ENCODE measurements at regions of chr3 and their contacts with region 1.

Region 1: DNA sequence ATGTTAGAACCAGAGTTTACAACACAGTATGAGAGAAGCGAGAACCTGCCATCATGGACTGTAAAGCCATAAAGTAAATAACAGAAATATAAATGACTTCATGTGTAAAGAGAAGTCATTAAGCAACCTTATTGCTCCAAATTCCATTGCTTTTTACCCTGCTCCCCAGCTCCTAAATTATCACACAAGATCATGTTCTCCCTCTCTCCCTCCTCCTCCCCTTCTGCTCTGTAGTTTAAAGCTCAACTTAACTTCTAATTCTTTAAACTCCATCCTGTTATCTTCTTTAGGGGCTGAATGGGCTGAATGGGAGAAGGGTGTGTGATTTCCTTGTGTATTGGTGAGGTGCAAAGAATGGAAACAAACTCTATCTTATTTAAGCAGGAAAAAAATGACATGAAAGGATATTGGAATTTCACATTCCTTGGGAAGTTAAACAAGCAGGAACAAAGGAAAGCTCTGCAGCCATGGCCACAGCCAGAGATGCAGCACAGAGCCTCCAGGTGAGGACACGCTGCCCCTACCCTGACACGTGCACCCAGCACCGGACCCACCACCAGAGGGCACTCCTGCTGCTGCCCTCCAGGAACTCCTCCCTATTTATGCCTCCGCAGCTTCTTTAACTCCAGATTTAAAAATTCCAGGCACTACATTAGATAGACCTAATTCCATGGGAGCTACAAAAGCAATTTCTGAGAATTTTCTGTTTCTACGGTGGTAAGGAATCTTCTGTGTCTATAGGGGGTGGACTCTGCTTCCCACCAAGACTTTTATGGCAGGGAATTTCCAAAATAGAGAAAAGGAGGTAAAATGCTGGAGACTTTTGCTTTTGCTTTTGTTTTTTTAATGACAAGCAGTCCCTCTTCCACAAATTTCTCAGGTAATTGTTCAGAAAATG is 76.9 kb upstream of the ABI3BP start:
- DNase-seq: peak; percentile 94
- H3K4me3 Mint-ChIP-seq: no peak overlapping the region
- H3K27ac Mint-ChIP-seq: peak overlapping the region; percentile 72
- H3K4me1 Mint-ChIP-seq: peaks cover 47% of the 10 kb centered on the region
- H3K27me3 Mint-ChIP-seq: no peaks in the 10 kb centered on the region
- CTCF ChIP-seq: peak; percentile 80

Region 2: DNA sequence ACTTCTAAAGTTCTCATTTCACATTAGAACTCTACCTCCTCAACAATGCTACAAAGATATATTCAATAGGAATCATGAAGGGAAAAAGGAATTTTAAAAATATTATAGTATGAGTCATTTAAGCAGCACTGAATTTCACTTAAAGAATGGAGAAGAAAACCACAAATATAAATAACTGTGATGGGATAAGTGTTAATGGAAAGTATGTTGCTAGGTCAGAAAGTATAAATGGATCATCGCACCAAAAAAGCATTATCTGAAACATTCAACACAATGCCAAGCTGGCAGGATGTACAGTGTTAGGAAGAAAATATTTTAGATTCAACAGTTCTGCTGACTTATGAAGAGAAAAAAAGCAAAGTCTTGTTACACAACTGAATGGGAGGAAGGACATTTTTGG is 259.5 kb before region 1 on chr3:
- CTCF ChIA-PET with region 1: no interaction called
- intact Hi-C with region 1: no loop called
- DNase-seq: no peak
- H3K4me3 Mint-ChIP-seq: no peak overlapping the region
- H3K27ac Mint-ChIP-seq: no peak overlapping the region
- H3K4me1 Mint-ChIP-seq: no peaks in the 10 kb centered on the region
- H3K27me3 Mint-ChIP-seq: no peaks in the 10 kb centered on the region
- CTCF ChIP-seq: no peak

Region 3: DNA sequence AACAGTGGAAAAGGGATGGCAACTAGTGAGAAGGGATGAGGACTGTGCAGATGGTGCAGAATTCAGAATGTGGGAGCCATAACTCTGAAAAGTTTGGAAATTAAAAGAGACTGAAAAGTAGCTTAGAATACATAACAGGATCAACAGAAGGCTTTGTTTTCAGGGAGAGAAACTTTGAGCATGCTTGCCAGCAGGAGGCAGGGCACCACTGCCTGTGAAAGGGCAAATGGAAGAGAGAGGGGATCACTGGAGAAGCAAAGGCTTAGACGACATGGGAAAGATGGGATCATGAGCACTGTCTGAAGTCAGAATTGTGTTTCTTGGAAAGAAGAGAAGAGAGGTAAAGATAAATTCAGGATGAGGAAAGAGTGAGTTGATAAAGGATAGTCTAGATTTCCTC is 176.6 kb before region 1 on chr3:
- CTCF ChIA-PET with region 1: interaction called, 4 read pairs
- intact Hi-C with region 1: loop called (anchors 5 kb)
- DNase-seq: peak; percentile 50
- H3K4me3 Mint-ChIP-seq: no peak overlapping the region
- H3K27ac Mint-ChIP-seq: no peak overlapping the region
- H3K4me1 Mint-ChIP-seq: peaks cover 16% of the 10 kb centered on the region
- H3K27me3 Mint-ChIP-seq: no peaks in the 10 kb centered on the region
- CTCF ChIP-seq: peak; percentile 18

Region 4: DNA sequence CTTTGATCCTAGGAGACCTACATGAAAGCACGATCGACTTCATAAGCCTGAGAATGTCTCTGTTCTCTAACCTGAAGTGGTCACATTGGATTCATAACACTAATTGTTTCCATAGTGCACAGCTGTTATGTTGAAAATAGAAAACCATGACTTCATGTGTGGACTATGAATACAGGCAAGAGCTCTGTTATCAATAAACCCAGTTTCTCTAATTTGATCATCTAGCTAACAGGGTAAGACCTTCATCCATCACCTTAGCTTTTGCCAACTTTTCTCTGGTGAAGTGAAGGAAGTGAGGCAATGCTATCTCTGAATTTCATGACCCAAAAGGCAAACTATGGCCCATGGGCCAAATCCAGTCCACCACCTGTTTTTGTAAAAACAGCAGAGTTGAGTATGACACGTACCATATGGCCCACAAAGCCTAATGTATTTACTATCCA is 104.1 kb before region 1 on chr3:
- CTCF ChIA-PET with region 1: no interaction called
- intact Hi-C with region 1: no loop called
- DNase-seq: no peak
- H3K4me3 Mint-ChIP-seq: no peak overlapping the region
- H3K27ac Mint-ChIP-seq: no peak overlapping the region
- H3K4me1 Mint-ChIP-seq: no peaks in the 10 kb centered on the region
- H3K27me3 Mint-ChIP-seq: no peaks in the 10 kb centered on the region
- CTCF ChIP-seq: no peak

Region 5: GRCh38 chr3:100993309-100993708 is 76.8 kb before region 1 on chr3 and contains the start of gene ABI3BP:
- CTCF ChIA-PET with region 1: interaction called, 3 read pairs
- intact Hi-C with region 1: loop called (anchors 5 kb)
- DNase-seq: peak; percentile 56
- H3K4me3 Mint-ChIP-seq: peak within 1 kb of the TSS; percentile 56
- H3K27ac Mint-ChIP-seq: peak within 1 kb of the TSS; percentile 27
- H3K4me1 Mint-ChIP-seq: peaks cover 6% of the 10 kb centered on the region
- H3K27me3 Mint-ChIP-seq: no peaks in the 10 kb centered on the region
- CTCF ChIP-seq: no peak
- total RNA-seq, gene ABI3BP: 5.2 and 19.5 TPM in 2 replicates

Region 6: DNA sequence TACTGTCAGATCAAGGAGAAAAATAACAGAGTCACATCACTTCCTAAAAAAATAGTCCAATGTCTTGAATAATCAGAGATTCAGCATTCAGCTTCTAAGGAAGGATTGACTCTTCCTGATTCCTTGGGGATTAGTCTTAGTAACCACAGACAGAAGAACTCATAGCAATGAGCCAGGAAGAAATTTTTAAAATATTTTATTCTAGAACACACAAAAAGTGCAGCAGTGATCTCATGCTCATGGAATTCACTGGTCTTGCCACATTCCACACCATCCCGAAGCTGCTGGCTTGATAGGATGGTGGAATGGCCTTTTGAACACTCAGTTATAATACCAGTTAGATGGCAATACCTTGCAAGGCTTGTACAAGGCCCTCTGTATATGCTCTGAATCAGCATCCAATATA is 33.9 kb before region 1 on chr3:
- CTCF ChIA-PET with region 1: no interaction called
- intact Hi-C with region 1: loop called (anchors 2 kb)
- DNase-seq: peak; percentile 75
- H3K4me3 Mint-ChIP-seq: no peak overlapping the region
- H3K27ac Mint-ChIP-seq: peak overlapping the region; percentile 94
- H3K4me1 Mint-ChIP-seq: peaks cover 47% of the 10 kb centered on the region
- H3K27me3 Mint-ChIP-seq: no peaks in the 10 kb centered on the region
- CTCF ChIP-seq: no peak

Region 7: GRCh38 chr3:101081999-101082398 is 11.8 kb after region 1 on chr3:
- CTCF ChIA-PET with region 1: no interaction called
- intact Hi-C with region 1: no loop called
- DNase-seq: no peak
- H3K4me3 Mint-ChIP-seq: no peak overlapping the region
- H3K27ac Mint-ChIP-seq: no peak overlapping the region
- H3K4me1 Mint-ChIP-seq: peaks cover 24% of the 10 kb centered on the region
- H3K27me3 Mint-ChIP-seq: no peaks in the 10 kb centered on the region
- CTCF ChIP-seq: no peak

Region 8: GRCh38 chr3:101144105-101144504 is 74.0 kb after region 1 on chr3:
- CTCF ChIA-PET with region 1: interaction called, 5 read pairs
- intact Hi-C with region 1: loop called (anchors 1 kb)
- DNase-seq: peak; percentile 46
- H3K4me3 Mint-ChIP-seq: no peak overlapping the region
- H3K27ac Mint-ChIP-seq: no peak overlapping the region
- H3K4me1 Mint-ChIP-seq: peaks cover 58% of the 10 kb centered on the region
- H3K27me3 Mint-ChIP-seq: no peaks in the 10 kb centered on the region
- CTCF ChIP-seq: no peak

Region 9: GRCh38 chr3:101381809-101382208 is 311.7 kb after region 1 on chr3:
- CTCF ChIA-PET with region 1: no interaction called
- intact Hi-C with region 1: loop called (anchors 2 kb)
- DNase-seq: no peak
- H3K4me3 Mint-ChIP-seq: no peak overlapping the region
- H3K27ac Mint-ChIP-seq: no peak overlapping the region
- H3K4me1 Mint-ChIP-seq: no peaks in the 10 kb centered on the region
- H3K27me3 Mint-ChIP-seq: no peaks in the 10 kb centered on the region
- CTCF ChIP-seq: no peak

Region 10: GRCh38 chr3:101709126-101709525 is 639.0 kb after region 1 on chr3:
- CTCF ChIA-PET with region 1: no interaction called
- intact Hi-C with region 1: no loop called
- DNase-seq: no peak
- H3K4me3 Mint-ChIP-seq: no peak overlapping the region
- H3K27ac Mint-ChIP-seq: no peak overlapping the region
- H3K4me1 Mint-ChIP-seq: no peaks in the 10 kb centered on the region
- H3K27me3 Mint-ChIP-seq: no peaks in the 10 kb centered on the region
- CTCF ChIP-seq: no peak

Measured in Calu3 (cell line).